AG04449 (cell line): ENCODE measurements at regions of chr10 and their contacts with region 1.

Region 1: DNA sequence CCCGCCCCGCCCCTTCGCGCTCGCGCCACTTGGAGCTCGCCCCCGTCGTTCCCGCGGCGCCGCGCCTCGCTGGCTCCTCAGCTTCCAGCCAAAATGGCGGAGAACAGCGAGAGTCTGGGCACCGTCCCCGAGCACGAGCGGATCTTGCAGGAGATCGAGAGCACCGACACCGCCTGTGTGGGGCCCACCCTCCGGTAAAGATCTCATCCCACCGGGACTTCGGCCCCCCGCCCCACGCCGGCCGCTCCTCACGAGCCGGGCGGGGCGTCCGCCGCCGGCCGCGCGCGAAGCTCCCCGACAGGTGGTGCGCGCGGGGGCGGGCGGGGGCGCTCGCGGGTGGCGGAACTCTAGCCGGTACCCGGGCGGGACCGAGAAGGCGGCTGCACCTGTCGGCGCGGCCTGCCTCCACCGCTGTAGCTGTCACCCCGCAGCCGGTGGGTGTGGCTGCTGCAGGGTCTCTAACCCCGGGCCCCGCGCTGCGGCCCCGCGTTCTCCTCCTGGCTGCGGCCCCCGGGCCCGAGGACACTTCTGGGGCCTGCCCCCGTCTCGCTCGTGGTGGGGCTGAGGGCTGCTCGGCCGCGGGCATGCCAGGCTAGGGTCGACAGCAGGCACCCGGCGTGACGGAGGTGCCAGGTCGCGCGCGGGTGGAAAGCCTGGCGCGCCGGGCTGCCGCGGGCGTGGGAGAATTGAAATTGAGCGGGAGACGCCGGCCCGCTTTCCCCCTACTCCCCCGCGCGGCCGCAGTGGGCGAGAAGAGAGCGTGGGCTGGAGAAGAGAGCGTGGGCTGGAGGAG is at the start of gene EXOC6:
- DNase-seq: no peak
- H3K4me3 ChIP-seq: peak within 1 kb of the TSS; percentile 70
- CTCF ChIP-seq: peak; percentile 5

Region 2: GRCh38 chr10:92829042-92829785 is 19.4 kb before region 1 on chr10:
- CTCF ChIA-PET with region 1: interaction called, 51 read pairs
- POLR2A ChIA-PET with region 1: no interaction called
- DNase-seq: no peak
- H3K4me3 ChIP-seq: no peak overlapping the region
- CTCF ChIP-seq: no peak

Region 3: DNA sequence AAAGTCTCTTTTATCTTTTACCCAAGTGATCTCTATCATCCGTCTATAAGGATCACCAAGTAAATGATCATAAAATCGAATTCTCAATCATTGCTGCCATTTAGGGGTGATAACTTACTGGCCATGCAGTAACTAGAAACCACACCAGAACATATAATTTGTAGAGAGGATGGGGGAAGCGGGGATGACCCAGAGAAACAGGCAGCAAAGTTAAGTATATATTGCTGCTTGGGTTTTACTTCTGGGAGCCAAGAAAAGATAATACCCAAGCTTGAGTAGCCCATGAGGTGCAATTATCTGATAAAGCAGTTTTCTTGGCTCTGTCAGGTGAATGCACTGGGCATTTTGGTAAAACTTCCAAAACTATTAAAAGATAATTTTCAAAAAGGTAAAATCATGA is 18.6 kb after region 1 on chr10:
- CTCF ChIA-PET with region 1: interaction called, 15 read pairs
- POLR2A ChIA-PET with region 1: no interaction called
- DNase-seq: no peak
- H3K4me3 ChIP-seq: no peak overlapping the region
- CTCF ChIP-seq: no peak

Region 4: DNA sequence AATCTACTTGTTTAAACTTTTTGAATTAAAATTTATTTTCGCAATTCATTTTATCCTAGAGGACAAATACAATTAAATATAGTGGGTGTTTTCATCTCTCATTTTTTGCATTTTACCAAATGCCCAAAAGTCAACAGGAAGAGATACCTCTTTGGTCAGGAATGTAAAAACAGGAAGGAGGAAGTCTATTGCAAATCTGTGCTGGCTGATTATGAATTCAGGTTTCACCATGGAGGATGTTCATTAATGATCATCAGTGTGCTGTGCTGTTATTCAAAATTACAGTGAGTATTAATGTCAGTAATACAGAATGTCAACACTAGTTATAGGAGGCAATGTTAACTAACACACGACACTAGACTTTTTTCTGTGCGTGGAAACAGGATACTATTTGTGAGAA is 24.4 kb after region 1 on chr10:
- CTCF ChIA-PET with region 1: interaction called, 24 read pairs
- POLR2A ChIA-PET with region 1: no interaction called
- DNase-seq: no peak
- H3K4me3 ChIP-seq: no peak overlapping the region
- CTCF ChIP-seq: no peak

Region 5: DNA sequence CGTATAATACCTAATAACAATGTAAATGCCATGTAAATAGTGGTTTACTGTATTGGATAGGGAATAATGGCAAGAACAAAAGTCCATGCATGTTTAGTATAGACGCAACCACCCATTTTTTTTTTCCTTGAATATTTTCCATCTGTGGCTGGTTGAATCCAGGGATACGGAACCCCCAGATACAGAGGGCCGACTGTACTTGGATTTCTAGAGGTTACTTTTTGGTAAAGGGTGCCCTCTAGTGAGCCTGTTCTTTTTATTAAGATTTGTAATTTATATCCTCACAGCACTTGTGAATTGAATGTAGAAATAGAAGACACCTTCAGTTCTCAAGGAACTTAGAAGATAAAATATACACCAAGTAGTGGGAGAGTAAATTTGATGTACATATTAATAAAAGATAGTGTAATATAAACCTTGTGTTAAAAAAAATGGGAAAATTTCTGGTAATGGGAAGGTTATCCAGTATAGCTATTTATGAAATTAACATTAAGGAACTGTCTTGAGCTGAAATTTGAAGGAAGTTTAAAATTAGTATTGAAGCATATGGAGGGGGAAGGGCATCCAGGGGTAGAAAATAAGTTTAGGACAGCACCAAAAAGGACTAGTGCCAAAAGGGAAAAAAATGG is 31.7 kb after region 1 on chr10:
- CTCF ChIA-PET with region 1: interaction called, 24 read pairs
- POLR2A ChIA-PET with region 1: no interaction called
- DNase-seq: no peak
- H3K4me3 ChIP-seq: no peak overlapping the region
- CTCF ChIP-seq: peak; percentile 22